Activated CD8-positive, alpha-beta T cell treated with anti-CD3 and anti-CD28 coated beads for 36 hours (primary cell): ENCODE measurements at regions of chr17 and their contacts with region 1.

Region 1: GRCh38 chr17:31842183-31843069 is 16.6 kb downstream of the COPRS start:
- DNase-seq: peak; percentile 71
- ATAC-seq: peak; percentile 89
- H3K4me3 Mint-ChIP-seq: no peak overlapping the region
- H3K27ac Mint-ChIP-seq: no peak overlapping the region
- H3K4me1 Mint-ChIP-seq: no peaks in the 10 kb centered on the region
- H3K27me3 Mint-ChIP-seq: peaks cover 4% of the 10 kb centered on the region
- CTCF ChIP-seq: peak; percentile 81

Region 2: GRCh38 chr17:31533546-31534155 is 308.8 kb before region 1 on chr17:
- CTCF ChIA-PET with region 1: interaction called, 29 read pairs
- POLR2A ChIA-PET with region 1: no interaction called
- intact Hi-C with region 1: no loop called
- DNase-seq: peak; percentile 49
- ATAC-seq: peak; percentile 38
- H3K4me3 Mint-ChIP-seq: no peak overlapping the region
- H3K27ac Mint-ChIP-seq: no peak overlapping the region
- H3K4me1 Mint-ChIP-seq: peaks cover 17% of the 10 kb centered on the region
- H3K27me3 Mint-ChIP-seq: no peaks in the 10 kb centered on the region
- CTCF ChIP-seq: no peak

Region 3: GRCh38 chr17:31544186-31544585 is 298.2 kb before region 1 on chr17:
- CTCF ChIA-PET with region 1: interaction called, 12 read pairs
- POLR2A ChIA-PET with region 1: no interaction called
- intact Hi-C with region 1: no loop called
- DNase-seq: no peak
- ATAC-seq: no peak
- H3K4me3 Mint-ChIP-seq: no peak overlapping the region
- H3K27ac Mint-ChIP-seq: no peak overlapping the region
- H3K4me1 Mint-ChIP-seq: peaks cover 10% of the 10 kb centered on the region
- H3K27me3 Mint-ChIP-seq: no peaks in the 10 kb centered on the region
- CTCF ChIP-seq: no peak

Region 4: GRCh38 chr17:31558748-31559644 is 283.4 kb before region 1 on chr17:
- CTCF ChIA-PET with region 1: interaction called, 21 read pairs
- POLR2A ChIA-PET with region 1: no interaction called
- intact Hi-C with region 1: loop called (anchors 5 kb)
- DNase-seq: peak; percentile 53
- ATAC-seq: peak; percentile 90
- H3K4me3 Mint-ChIP-seq: peak overlapping the region; percentile 62
- H3K27ac Mint-ChIP-seq: no peak overlapping the region
- H3K4me1 Mint-ChIP-seq: peaks cover 17% of the 10 kb centered on the region
- H3K27me3 Mint-ChIP-seq: peaks cover 8% of the 10 kb centered on the region
- CTCF ChIP-seq: peak; percentile 67

Region 5: DNA sequence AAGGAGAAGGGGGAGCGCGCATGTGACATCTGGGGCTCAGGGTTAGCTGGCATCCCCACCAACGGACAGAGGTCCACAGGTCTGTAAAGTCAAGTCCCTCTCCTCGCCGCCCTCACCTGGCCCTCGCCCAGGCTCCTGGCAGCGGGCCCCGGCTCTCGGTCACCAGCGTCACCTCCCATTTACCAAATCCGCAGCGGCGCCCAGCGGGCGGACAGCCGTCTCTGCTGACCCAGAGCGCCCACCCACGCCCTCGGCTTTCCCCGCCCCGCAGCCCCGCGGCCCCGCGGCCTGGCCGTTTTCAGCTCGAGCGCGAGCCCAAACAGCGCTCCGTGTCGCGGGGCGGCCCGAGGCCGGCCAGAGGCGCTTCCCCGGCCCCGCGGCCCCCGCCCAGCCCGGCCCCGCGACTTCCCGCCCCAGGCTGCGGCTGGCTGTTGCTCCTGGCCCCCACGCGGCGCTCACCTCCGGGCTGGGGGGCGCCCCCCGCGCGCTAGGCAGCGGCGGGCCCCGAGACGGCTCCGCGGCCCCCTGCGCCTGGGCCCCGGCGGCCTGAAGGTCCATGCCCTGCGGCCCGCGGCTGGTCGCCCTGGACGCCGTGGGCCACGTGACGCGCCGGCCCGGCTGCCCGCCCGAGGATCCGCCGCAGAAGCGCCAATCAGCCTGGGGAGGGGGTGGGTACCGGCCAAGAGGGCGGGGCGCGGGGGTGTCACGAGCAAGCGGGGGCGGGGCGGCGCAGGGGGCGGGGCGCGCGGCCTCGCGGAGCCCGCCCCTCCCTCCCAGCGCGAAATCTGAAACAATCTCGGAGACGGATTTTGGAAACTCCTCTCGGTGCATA is 16.4 kb after region 1 on chr17 and contains the start of gene COPRS:
- CTCF ChIA-PET with region 1: interaction called, 24 read pairs
- POLR2A ChIA-PET with region 1: no interaction called
- intact Hi-C with region 1: no loop called
- DNase-seq: peak; percentile 80
- ATAC-seq: peak; percentile 85
- H3K4me3 Mint-ChIP-seq: peak within 1 kb of the TSS; percentile 73
- H3K27ac Mint-ChIP-seq: peak within 1 kb of the TSS; percentile 83
- H3K4me1 Mint-ChIP-seq: peaks cover 18% of the 10 kb centered on the region
- H3K27me3 Mint-ChIP-seq: no peaks in the 10 kb centered on the region
- CTCF ChIP-seq: no peak
- total RNA-seq, gene COPRS: 57.5 to 57.6 TPM